ENCODE measurements at regions of chr17 and their contacts with region 1.

Region 1: GRCh38 chr17:19648475-19649406 is at the start of gene ALDH3A2:
- DNase-seq: peak; percentile 99 to 100 (median 100)

Region 2: DNA sequence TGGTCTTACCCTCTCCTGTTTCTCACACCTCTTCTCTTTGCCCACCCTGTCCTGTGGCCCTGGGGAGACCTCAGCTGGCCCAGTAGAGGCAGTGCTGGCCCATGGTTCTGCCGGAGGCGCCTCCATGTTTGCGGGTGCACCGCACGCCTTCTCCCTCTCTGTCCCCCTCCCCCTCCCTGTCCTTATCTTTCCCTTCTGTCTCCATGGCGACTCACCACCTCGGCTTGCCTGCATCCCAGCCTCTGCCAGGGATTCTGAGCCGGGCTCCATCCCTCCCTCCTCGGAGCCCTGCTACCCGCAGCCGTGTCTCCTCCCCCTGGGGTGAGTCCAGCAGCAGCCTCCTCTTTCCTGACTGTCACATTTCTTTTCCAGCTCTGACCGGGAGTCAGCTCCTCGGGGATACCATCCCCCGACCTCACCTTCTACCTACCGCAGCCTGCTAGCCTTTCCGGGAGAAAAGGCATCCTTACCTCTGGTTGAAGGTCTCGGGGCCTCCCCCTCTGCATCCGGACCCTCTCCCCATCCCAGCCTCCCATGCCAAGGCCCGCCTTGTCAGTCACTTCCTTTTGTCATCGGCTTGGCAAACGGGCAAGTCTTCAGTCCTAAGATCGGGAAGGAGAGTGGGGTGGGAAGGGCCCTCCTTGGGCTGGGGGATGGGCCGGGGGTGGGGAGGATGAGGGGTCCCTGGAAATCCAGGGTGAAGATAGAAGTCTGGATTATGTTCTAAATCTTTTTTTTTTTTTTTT is 237.7 kb before region 1 on chr17 and contains the start of gene RNF112:
- intact Hi-C with region 1: no loop called
- DNase-seq: peak; percentile 46 to 90 (median 73)

Region 3: DNA sequence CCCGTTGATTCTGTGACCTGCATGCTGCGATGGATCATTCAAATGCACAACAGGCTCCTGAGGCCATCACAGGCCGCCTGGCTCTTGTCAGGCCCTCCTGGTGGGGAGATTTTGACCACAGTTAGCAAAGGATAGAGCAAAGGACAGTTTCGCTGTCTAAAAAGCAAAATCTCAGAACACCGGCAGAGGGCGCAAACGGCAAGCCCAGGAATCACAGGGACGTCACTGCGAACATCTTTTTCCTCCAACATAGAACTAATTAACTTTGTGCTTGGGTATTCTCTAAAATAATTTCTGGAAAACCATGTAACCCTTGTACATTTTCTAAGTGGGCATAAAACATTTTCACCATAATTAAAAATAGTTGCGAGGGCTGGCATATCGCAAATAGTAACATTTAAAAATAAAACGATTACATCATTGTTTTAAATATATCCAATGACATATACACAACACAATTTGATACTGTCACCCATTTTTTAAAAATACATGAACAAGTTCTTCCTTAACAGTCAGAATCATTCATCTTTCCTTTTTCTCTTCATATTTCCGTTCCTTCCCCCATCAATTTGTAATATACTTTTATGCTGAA is 134.7 kb before region 1 on chr17:
- intact Hi-C with region 1: loop called (anchors 5 kb)
- DNase-seq: peak; percentile 59 to 92 (median 80)

Region 4: DNA sequence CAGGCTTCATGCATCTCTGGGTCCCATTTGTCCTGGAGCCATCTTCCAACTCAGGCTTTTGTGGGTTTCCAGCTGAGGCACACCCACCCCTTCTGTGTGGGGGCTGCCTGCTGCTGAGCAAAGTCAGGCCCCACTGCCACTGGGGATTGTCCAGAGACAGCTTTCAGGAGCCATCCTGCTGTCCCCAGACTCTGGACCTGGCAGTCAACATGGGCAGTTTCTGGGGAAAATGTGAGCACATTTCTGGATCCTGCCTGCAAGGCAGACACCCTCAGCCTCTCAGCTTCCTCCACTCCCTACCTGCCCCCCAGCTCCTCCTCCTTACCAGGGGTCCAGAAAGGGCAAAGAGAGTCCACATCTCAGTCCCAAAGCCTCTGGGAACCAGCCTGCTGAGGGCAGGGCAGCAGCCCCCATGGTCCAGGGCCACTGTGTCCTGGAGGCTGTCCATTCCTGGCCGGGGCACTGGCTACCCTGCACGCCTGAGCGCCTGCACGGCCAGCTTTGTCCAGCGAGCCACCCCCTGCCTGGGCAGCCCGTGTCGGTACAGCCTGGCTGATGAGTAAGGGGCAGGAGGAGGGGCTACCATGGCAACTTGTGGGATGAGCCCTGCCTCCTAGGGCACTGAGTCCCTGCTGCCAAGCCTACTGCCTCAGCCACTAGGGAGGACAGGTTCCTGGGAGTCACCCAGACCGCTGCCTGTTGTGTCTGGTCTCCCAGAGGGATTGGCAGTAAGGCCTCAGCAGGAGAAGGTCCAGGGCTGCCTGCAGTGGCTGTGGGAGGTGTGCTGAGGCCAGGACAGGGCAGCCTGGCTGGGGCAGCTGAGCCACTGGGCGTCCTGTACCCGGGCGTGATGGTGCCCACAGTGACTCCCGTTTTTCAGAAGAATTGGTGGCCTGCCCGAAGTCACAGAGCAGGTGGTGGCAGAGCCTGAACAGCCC is 67.6 kb after region 1 on chr17 and contains the start of gene SLC47A2:
- intact Hi-C with region 1: no loop called
- DNase-seq: peak in 13 of 42 donors; percentile 16 to 70 (median 33)

Region 5: DNA sequence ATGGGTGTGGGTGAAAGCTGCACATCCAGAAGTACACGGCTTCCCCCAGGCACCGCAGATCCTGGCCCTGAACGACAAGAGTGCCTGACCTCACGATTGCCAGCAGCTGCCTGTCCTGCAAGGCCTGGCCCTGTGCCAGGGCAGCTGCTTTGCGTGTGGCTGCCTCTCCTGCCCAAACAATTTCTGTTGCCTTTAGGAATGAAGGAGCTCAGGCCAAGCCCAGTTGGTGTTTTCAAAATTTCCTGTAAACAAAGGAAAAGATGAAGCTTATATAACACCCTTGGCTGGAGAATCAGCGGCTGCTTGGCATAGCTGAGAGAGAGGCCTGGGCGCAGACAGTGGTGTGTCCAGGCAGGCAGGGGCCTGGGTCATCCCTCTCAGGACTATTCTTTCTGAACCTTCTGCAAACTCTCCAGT is 79.3 kb after region 1 on chr17:
- intact Hi-C with region 1: loop called (anchors 5 kb)
- DNase-seq: peak; percentile 49 to 93 (median 85)

Region 6: GRCh38 chr17:19762515-19762961 is 113.8 kb after region 1 on chr17:
- intact Hi-C with region 1: loop called (anchors 5 kb)
- DNase-seq: peak; percentile 51 to 92 (median 79)